ENCODE measurements at regions of chr16 and their contacts with region 1.

Region 1: DNA sequence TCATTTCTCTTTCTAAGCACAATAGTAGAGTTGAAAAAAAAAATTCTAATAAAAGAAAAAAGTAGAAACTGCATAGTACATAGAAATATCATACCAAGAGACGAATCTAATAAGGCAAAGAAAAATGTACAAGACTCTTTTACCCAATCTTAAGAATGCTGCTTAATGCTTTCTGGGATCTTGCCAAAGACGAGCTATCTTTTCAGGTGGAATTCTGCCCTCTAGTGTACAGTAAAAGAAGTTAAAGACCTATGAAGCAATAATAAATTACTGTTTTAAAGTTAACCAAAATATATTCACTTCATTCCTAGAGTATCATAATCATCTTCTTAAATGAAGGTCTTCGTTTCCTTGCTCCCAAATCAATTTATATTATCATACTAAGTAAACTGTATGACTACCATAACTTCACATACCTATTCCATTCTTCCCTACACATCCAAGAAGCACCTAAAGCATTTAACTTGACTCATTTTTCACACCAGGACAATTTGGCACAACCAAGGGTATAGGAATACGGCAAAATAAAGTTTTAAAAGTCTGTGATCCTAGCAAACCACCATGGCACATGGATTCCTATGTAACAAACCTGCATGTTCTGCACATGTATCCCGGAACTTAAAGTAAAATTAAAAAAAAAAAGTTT is 47.7 kb downstream of the CFDP1 start:
- DNase-seq: no peak
- H3K4me3 Mint-ChIP-seq: no peak overlapping the region
- H3K27ac Mint-ChIP-seq: no peak overlapping the region
- H3K4me1 Mint-ChIP-seq: peaks cover 22% of the 10 kb centered on the region
- H3K27me3 Mint-ChIP-seq: no peaks in the 10 kb centered on the region

Region 2: DNA sequence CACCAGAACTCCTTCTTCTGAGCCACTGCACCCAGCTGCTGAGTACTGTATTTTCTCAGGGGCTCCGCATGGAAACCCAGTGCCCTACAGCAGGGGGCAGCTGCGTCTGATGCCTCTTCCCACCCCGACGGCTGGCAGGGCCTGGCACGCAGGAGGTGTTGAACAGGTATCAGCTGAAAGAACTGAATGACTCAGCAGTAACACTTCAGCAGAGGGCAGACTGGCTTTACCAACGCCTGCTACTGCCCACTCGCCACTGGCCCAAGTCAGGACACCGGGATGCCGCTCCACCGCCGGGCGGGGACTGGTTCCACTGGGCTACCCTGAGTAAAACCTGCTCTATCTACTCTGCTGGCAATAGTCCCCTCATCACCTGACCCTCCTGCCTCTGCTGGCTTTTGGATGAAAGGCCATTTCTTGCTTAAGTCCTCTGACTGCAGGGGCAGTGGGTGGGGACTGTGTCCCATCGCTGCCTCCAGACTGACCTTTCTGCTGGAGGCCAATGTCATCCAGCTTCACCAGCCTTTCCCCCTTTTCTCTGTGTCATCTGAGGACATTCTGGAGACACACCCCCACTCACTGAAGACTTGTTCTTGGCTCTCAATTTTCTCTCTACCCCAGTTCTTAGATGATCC is 510.6 kb before region 1 on chr16:
- CTCF ChIA-PET with region 1: no interaction called
- POLR2A ChIA-PET with region 1: no interaction called
- intact Hi-C with region 1: no loop called
- DNase-seq: no peak
- H3K4me3 Mint-ChIP-seq: no peak overlapping the region
- H3K27ac Mint-ChIP-seq: no peak overlapping the region
- H3K4me1 Mint-ChIP-seq: no peaks in the 10 kb centered on the region
- H3K27me3 Mint-ChIP-seq: no peaks in the 10 kb centered on the region

Region 3: GRCh38 chr16:75272097-75272551 is 113.5 kb before region 1 on chr16:
- CTCF ChIA-PET with region 1: no interaction called
- POLR2A ChIA-PET with region 1: no interaction called
- intact Hi-C with region 1: no loop called
- DNase-seq: no peak
- H3K4me3 Mint-ChIP-seq: no peak overlapping the region
- H3K27ac Mint-ChIP-seq: no peak overlapping the region
- H3K4me1 Mint-ChIP-seq: peaks cover 3% of the 10 kb centered on the region
- H3K27me3 Mint-ChIP-seq: peaks cover 4% of the 10 kb centered on the region

Region 4: DNA sequence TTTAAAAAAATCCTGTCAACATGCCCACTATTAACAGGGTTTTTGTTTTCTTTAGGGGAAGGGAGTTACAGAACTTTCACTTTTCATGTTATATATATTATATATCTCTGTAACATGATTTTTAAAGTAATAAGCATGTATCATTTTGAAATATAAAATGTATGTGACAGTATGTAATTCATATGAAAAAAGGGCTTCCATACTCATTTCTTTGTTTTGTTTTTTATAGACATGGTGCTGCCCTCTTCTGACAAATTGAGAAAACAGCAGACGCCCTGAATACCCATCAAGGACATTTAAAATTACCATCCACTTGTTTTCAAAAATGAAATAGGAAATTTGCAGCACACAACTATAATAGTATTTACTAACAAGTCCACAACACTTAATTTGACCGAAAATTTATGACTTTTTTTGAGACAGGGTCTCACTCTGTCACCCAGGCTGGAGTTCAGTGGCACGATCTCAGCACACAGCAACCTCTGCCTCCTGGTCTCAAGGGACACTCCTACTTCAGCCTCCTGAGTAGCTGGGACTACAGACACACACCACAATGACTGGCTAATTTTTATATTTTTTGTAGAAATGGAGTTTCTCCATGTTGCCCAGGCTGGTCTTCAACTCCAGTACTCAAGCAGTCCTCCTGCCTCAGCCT is 17.3 kb after region 1 on chr16:
- CTCF ChIA-PET with region 1: interaction called, 12 read pairs
- POLR2A ChIA-PET with region 1: interaction called, 3 read pairs
- intact Hi-C with region 1: no loop called
- DNase-seq: no peak
- H3K4me3 Mint-ChIP-seq: no peak overlapping the region
- H3K27ac Mint-ChIP-seq: no peak overlapping the region
- H3K4me1 Mint-ChIP-seq: peaks cover 16% of the 10 kb centered on the region
- H3K27me3 Mint-ChIP-seq: no peaks in the 10 kb centered on the region

Region 5: GRCh38 chr16:75433732-75434413 is 48.2 kb after region 1 on chr16:
- CTCF ChIA-PET with region 1: no interaction called
- POLR2A ChIA-PET with region 1: no interaction called
- intact Hi-C with region 1: no loop called
- DNase-seq: no peak
- H3K4me3 Mint-ChIP-seq: peak overlapping the region; percentile 90
- H3K27ac Mint-ChIP-seq: peak overlapping the region; percentile 87
- H3K4me1 Mint-ChIP-seq: peaks cover 32% of the 10 kb centered on the region
- H3K27me3 Mint-ChIP-seq: no peaks in the 10 kb centered on the region

Measured in activated CD4-positive, alpha-beta memory T cell treated with anti-CD3 and anti-CD28 coated beads for 36 hours (primary cell).